CD4-positive, alpha-beta memory T cell (primary cell): ENCODE measurements at regions of chr2 and their contacts with region 1.

Region 1: DNA sequence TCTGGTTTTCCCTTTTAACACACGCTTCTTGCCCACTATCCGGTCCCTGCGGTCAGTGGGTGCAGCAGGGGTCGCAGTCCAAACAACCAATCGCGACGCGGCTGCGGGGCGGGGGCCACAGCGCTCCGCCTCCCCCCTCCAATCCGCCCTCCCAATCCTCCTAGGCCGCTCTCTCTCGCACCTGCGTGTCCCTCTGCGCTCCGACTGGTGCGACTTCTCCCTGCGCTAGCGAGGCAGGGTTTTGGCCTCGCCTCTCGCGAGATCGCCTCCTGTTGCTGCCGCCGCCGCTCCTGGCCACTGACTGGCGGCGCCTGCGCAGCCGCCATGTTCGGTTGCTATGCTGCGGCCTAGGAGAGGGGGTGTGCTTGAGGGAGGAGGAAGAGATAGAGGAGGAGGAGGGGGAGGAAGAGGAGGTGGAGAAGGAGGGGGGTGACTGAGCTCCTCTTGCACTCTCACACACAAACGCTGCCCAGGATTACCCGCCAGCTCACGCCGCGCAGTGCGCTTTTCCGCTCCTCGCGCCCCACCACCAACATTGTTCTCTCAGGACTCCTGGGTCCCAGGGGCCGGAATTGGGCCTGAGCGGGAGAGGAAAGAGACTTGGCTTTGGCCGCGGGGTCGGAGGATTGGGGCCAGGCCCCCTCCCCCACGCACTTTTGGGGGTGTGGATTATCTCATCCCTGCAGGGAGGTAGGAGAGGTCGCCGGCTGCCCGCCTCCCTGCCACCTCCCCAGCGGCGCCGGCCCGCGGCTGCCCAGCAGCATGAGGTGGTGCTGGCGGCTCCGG is at the start of gene PTPN4:
- DNase-seq: peak; percentile 94 to 98 (median 98)
- H3K4me3 ChIP-seq: peak within 1 kb of the TSS; percentile 82 to 88
- H3K4me3 Mint-ChIP-seq: peak within 1 kb of the TSS; percentile 93 to 97 (median 95)
- H3K27ac ChIP-seq: peak within 1 kb of the TSS; percentile 78
- H3K27ac Mint-ChIP-seq: peak within 1 kb of the TSS; percentile 88 to 94 (median 92)
- H3K4me1 ChIP-seq: peaks cover 50% of the 10 kb centered on the region
- H3K4me1 Mint-ChIP-seq: peaks cover 30 to 58% (median 37%) of the 10 kb centered on the region in 4 donors
- H3K27me3 ChIP-seq: no peaks in the 10 kb centered on the region
- H3K27me3 Mint-ChIP-seq: no peaks in the 10 kb centered on the region
- total RNA-seq, gene PTPN4: 83.1 to 88.3 TPM

Region 2: GRCh38 chr2:119198240-119198840 is 561.3 kb before region 1 on chr2:
- CTCF ChIA-PET with region 1: no interaction called
- POLR2A ChIA-PET with region 1: no interaction called
- intact Hi-C with region 1: no loop called
- DNase-seq: no peak
- H3K4me3 ChIP-seq: no peak overlapping the region
- H3K4me3 Mint-ChIP-seq: no peak overlapping the region
- H3K27ac ChIP-seq: no peak overlapping the region
- H3K27ac Mint-ChIP-seq: no peak overlapping the region
- H3K4me1 ChIP-seq: no peaks in the 10 kb centered on the region
- H3K4me1 Mint-ChIP-seq: no peaks in the 10 kb centered on the region
- H3K27me3 ChIP-seq: no peaks in the 10 kb centered on the region
- H3K27me3 Mint-ChIP-seq: peaks cover 4 to 10% of the 10 kb centered on the region in 2 donors

Region 3: GRCh38 chr2:119678998-119679710 is 80.5 kb before region 1 on chr2 and contains the start of gene TMEM177:
- CTCF ChIA-PET with region 1: no interaction called
- POLR2A ChIA-PET with region 1: interaction called, 29 read pairs
- intact Hi-C with region 1: loop called (anchors 1 kb)
- DNase-seq: peak; percentile 86 to 89 (median 88)
- H3K4me3 ChIP-seq: peak within 1 kb of the TSS; percentile 55 to 84
- H3K4me3 Mint-ChIP-seq: peak within 1 kb of the TSS; percentile 75 to 96 (median 94)
- H3K27ac ChIP-seq: peak within 1 kb of the TSS; percentile 75
- H3K27ac Mint-ChIP-seq: peak within 1 kb of the TSS; percentile 92 to 98 (median 97)
- H3K4me1 ChIP-seq: peaks cover 17% of the 10 kb centered on the region
- H3K4me1 Mint-ChIP-seq: peaks cover 21 to 49% (median 35%) of the 10 kb centered on the region in 4 donors
- H3K27me3 ChIP-seq: no peaks in the 10 kb centered on the region
- H3K27me3 Mint-ChIP-seq: peaks cover 0 to 6% of the 10 kb centered on the region in 2 donors
- total RNA-seq, gene TMEM177: 22.5 to 23.9 TPM

Region 4: GRCh38 chr2:119826370-119826961 is 66.8 kb after region 1 on chr2:
- CTCF ChIA-PET with region 1: interaction called, 91 read pairs
- POLR2A ChIA-PET with region 1: interaction called, 4 read pairs
- intact Hi-C with region 1: no loop called
- DNase-seq: peak in 4 of 5 donors; percentile 38 to 49 (median 41)
- H3K4me3 ChIP-seq: no peak overlapping the region
- H3K4me3 Mint-ChIP-seq: no peak overlapping the region
- H3K27ac ChIP-seq: no peak overlapping the region
- H3K27ac Mint-ChIP-seq: peak overlapping the region in 2 of 7 donors; percentile 31 to 32
- H3K4me1 ChIP-seq: peaks cover 5% of the 10 kb centered on the region
- H3K4me1 Mint-ChIP-seq: peaks cover 27 to 54% (median 44%) of the 10 kb centered on the region in 4 donors
- H3K27me3 ChIP-seq: no peaks in the 10 kb centered on the region
- H3K27me3 Mint-ChIP-seq: no peaks in the 10 kb centered on the region

Region 5: DNA sequence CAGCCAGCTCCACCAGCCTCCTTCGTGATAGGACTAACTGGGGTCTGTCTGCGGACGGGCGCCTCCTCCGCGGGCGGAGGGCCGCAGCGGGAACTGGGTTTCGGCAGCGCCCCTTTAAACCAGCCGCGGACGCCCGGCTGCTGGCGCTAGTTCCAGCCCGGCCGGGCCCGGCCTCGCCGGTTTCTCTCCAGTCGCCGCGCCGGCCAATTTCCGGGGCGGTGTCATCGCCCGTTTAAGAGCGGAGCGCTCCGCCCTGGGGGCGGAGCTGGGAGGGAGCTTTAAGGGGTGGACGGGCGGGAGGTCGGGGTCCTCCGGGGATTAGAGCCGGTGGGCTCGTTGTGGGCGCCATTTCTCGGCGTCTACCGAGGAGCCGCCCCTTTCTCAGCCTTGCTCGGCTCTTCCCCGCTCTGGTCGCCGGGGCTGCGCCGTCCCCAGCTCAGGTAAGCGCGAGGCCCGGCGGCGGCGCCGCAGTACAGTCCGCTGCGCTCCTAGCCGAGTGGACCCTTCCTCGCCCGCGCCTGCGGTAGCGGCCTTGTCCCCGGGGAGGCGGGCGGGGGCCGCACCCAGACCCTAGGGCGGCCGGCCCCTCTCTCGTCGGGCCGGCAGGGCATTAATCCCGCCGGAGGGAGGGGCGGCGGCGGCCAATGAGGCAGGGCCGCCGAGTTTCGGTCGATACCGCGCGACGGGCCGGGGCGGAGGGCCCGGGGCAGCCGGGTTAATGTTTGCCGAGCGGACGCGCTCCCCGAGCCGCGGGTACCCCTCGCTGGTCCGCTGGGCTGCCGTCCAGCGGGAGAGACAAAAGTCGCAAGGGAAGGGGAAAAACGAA is 253.3 kb after region 1 on chr2 and contains the start of gene EPB41L5:
- CTCF ChIA-PET with region 1: no interaction called
- POLR2A ChIA-PET with region 1: interaction called, 4 read pairs
- intact Hi-C with region 1: loop called (anchors 1 kb)
- DNase-seq: peak; percentile 63 to 74 (median 67)
- H3K4me3 ChIP-seq: peak within 1 kb of the TSS; percentile 52 to 76
- H3K4me3 Mint-ChIP-seq: peak within 1 kb of the TSS; percentile 82 to 87 (median 84)
- H3K27ac ChIP-seq: peak within 1 kb of the TSS; percentile 55
- H3K27ac Mint-ChIP-seq: peak within 1 kb of the TSS; percentile 0 to 86 (median 70)
- H3K4me1 ChIP-seq: peaks cover 15% of the 10 kb centered on the region
- H3K4me1 Mint-ChIP-seq: peaks cover 13 to 20% (median 15%) of the 10 kb centered on the region in 4 donors
- H3K27me3 ChIP-seq: no peaks in the 10 kb centered on the region
- H3K27me3 Mint-ChIP-seq: peaks cover 0 to 2% of the 10 kb centered on the region in 2 donors
- total RNA-seq, gene EPB41L5: 5.3 to 6.2 TPM

Region 6: GRCh38 chr2:120252225-120253021 is 492.8 kb after region 1 on chr2 and contains the start of gene RALB:
- CTCF ChIA-PET with region 1: no interaction called
- POLR2A ChIA-PET with region 1: no interaction called
- intact Hi-C with region 1: loop called (anchors 1 kb)
- DNase-seq: peak; percentile 97 to 99 (median 97)
- H3K4me3 ChIP-seq: peak within 1 kb of the TSS; percentile 78 to 80
- H3K4me3 Mint-ChIP-seq: peak within 1 kb of the TSS; percentile 99 to 100 (median 100)
- H3K27ac ChIP-seq: peak within 1 kb of the TSS; percentile 61
- H3K27ac Mint-ChIP-seq: peak within 1 kb of the TSS; percentile 87 to 99 (median 98)
- H3K4me1 ChIP-seq: peaks cover 44% of the 10 kb centered on the region
- H3K4me1 Mint-ChIP-seq: peaks cover 37 to 51% (median 43%) of the 10 kb centered on the region in 4 donors
- H3K27me3 ChIP-seq: no peaks in the 10 kb centered on the region
- H3K27me3 Mint-ChIP-seq: peaks cover 1 to 3% of the 10 kb centered on the region in 2 donors
- total RNA-seq, gene RALB: 14.0 TPM